Stomach (tissue), 19 donors: ENCODE measurements at regions of chr17 and their contacts with region 1.

Region 1: GRCh38 chr17:67376737-67377487 is at the start of gene PITPNC1:
- DNase-seq: peak; percentile 88 to 95
- H3K4me3 ChIP-seq: peak within 1 kb of the TSS; percentile 69 to 85 (median 82)
- H3K27ac ChIP-seq: peak within 1 kb of the TSS; percentile 88 to 97 (median 93)
- H3K4me1 ChIP-seq: peaks cover 8 to 39% (median 19%) of the 10 kb centered on the region in 4 donors
- H3K27me3 ChIP-seq: no peaks in the 10 kb centered on the region
- CTCF ChIP-seq: no peak
- EP300 ChIP-seq: no peak
- POLR2A ChIP-seq: peak in 1 of 4 donors; percentile 54
- total RNA-seq, gene PITPNC1: 2.3 to 25.3 (median 17.4) TPM

Region 2: DNA sequence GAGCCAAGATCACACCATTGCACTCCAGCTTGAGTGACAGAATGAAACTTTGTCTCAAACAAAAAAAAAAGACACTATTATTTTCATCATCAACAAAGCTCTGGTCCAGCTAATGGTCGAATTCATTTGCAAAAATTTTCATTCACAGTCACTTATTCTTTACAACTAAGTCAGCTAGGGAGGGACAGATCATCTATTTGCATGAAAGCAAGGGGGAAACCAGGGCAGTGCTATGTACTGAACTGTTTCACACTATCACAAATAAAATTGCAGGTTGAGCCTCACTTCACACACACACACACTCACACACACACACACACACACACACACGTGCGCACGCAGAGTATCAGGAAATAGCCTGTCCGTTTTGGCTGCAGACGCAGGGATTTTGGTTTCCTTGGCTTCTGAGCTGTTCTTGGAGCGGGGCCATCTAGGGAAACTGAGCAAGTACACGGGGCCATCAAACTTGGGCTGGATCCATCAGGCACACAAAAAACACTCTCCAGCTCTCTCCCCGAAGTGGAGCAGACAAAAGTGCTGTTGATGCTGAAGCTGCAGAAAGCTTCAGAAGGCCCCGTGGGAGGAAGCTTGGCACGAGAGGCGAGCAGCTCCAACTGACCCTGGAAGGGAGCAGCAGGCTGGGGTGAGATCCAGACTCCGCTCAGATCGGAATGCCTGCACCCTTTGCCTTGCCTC is 87.6 kb before region 1 on chr17:
- intact Hi-C with region 1: no loop called
- DNase-seq: peak; percentile 50 to 86
- H3K4me3 ChIP-seq: peak overlapping the region in 1 of 4 donors; percentile 17
- H3K27ac ChIP-seq: peak overlapping the region in 2 of 5 donors; percentile 24 to 27
- H3K4me1 ChIP-seq: peaks cover 7 to 38% (median 13%) of the 10 kb centered on the region in 4 donors
- H3K27me3 ChIP-seq: no peaks in the 10 kb centered on the region
- CTCF ChIP-seq: no peak
- EP300 ChIP-seq: no peak
- POLR2A ChIP-seq: no peak

Region 3: GRCh38 chr17:67312265-67312664 is 64.6 kb before region 1 on chr17:
- intact Hi-C with region 1: no loop called
- DNase-seq: no peak
- H3K4me3 ChIP-seq: no peak overlapping the region
- H3K27ac ChIP-seq: no peak overlapping the region
- H3K4me1 ChIP-seq: no peaks in the 10 kb centered on the region
- H3K27me3 ChIP-seq: no peaks in the 10 kb centered on the region
- CTCF ChIP-seq: no peak
- EP300 ChIP-seq: no peak
- POLR2A ChIP-seq: no peak

Region 4: DNA sequence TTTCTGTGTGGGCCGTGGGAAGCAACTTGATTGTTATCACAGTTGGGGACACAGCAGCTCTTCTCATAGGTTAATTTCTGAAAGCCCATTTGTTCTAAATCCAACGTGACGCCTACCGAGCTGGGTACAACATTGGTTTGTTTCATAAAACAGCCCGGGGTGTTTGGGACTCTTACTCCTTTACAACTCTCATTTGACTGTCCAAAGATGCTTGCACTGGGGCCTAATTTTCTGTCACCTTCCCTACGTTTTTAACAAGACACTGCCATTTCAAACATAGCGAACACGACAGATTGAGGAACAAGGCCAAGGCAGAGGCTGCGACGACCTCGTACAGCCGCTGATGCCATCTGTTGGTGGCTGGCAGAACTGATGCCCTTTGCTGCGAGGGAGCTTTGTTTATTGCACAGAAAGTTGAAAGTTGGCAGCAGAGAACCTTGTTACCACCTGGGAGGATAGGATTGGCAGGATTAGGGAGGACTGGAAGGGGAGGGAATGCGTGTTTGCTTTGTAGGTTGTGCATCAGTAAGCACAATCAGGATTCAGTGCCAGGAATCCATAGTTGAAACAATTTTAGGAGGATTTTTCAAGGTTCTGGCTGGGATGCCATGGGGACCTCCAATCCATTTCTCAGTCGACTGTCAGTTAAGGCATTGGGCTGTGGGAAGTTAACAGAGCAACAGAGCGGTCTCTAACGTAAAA is 98.5 kb after region 1 on chr17:
- intact Hi-C with region 1: loop called (anchors 5 kb)
- DNase-seq: peak; percentile 87 to 92
- H3K4me3 ChIP-seq: no peak overlapping the region
- H3K27ac ChIP-seq: peak overlapping the region; percentile 18 to 65 (median 50)
- H3K4me1 ChIP-seq: peaks cover 0 to 15% (median 8%) of the 10 kb centered on the region in 4 donors
- H3K27me3 ChIP-seq: no peaks in the 10 kb centered on the region
- CTCF ChIP-seq: peak in 5 of 7 experiments; percentile 87 to 96 (median 90)
- EP300 ChIP-seq: no peak
- POLR2A ChIP-seq: no peak

Region 5: GRCh38 chr17:67689534-67690177 is 312.7 kb after region 1 on chr17:
- intact Hi-C with region 1: loop called (anchors 10 kb)
- DNase-seq: peak; percentile 44 to 83
- H3K4me3 ChIP-seq: no peak overlapping the region
- H3K27ac ChIP-seq: no peak overlapping the region
- H3K4me1 ChIP-seq: peaks cover 0 to 4% (median 2%) of the 10 kb centered on the region in 4 donors
- H3K27me3 ChIP-seq: no peaks in the 10 kb centered on the region
- CTCF ChIP-seq: peak in 5 of 7 experiments; percentile 55 to 79 (median 75)
- EP300 ChIP-seq: no peak
- POLR2A ChIP-seq: no peak